ENCODE measurements at regions of chr16 and their contacts with region 1.

Region 1: GRCh38 chr16:10256784-10257641 is 74.8 kb upstream of the GRIN2A start:
- DNase-seq: peak; percentile 27
- H3K4me3 ChIP-seq: no peak overlapping the region
- H3K27ac ChIP-seq: no peak overlapping the region
- H3K4me1 ChIP-seq: peaks cover 6% of the 10 kb centered on the region
- H3K27me3 ChIP-seq: no peaks in the 10 kb centered on the region
- CTCF ChIP-seq: peak; percentile 49 to 83

Region 2: GRCh38 chr16:8878521-8878911 is 1378.5 kb before region 1 on chr16:
- CTCF ChIA-PET with region 1: no interaction called
- dilution Hi-C with region 1: no loop called
- in situ Hi-C with region 1: no loop called
- intact Hi-C with region 1: loop called (anchors 10 kb)
- DNase-seq: peak; percentile 72
- H3K4me3 ChIP-seq: no peak overlapping the region
- H3K27ac ChIP-seq: peak overlapping the region; percentile 34
- H3K4me1 ChIP-seq: peaks cover 15% of the 10 kb centered on the region
- H3K27me3 ChIP-seq: no peaks in the 10 kb centered on the region
- CTCF ChIP-seq: no peak

Region 3: GRCh38 chr16:9258423-9259051 is 998.5 kb before region 1 on chr16:
- CTCF ChIA-PET with region 1: no interaction called
- dilution Hi-C with region 1: no loop called
- in situ Hi-C with region 1: no loop called
- intact Hi-C with region 1: loop called (anchors 2 kb)
- DNase-seq: peak; percentile 12
- H3K4me3 ChIP-seq: no peak overlapping the region
- H3K27ac ChIP-seq: no peak overlapping the region
- H3K4me1 ChIP-seq: no peaks in the 10 kb centered on the region
- H3K27me3 ChIP-seq: no peaks in the 10 kb centered on the region
- CTCF ChIP-seq: peak; percentile 34 to 45

Region 4: DNA sequence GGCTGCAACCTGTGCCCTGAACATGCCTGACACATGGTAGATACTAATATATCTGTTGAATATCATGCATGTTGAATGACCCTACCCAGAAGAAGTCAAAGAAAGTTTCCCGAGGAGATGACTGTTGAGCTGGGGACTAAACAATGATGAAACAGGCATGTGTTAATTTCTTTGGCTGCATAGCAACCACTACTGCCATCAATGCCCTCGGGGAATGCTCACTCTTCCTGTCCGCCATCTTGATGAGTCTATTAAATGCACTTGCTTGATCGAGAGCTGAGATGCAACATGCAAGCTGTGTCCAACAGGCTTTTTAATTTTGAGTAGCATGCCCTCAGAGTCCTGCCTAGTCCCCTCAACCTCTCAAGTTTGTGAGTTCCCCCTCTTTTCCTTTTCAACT is 106.1 kb before region 1 on chr16:
- CTCF ChIA-PET with region 1: no interaction called
- dilution Hi-C with region 1: no loop called
- in situ Hi-C with region 1: no loop called
- intact Hi-C with region 1: no loop called
- DNase-seq: peak; percentile 39
- H3K4me3 ChIP-seq: no peak overlapping the region
- H3K27ac ChIP-seq: no peak overlapping the region
- H3K4me1 ChIP-seq: no peaks in the 10 kb centered on the region
- H3K27me3 ChIP-seq: no peaks in the 10 kb centered on the region
- CTCF ChIP-seq: no peak

Region 5: DNA sequence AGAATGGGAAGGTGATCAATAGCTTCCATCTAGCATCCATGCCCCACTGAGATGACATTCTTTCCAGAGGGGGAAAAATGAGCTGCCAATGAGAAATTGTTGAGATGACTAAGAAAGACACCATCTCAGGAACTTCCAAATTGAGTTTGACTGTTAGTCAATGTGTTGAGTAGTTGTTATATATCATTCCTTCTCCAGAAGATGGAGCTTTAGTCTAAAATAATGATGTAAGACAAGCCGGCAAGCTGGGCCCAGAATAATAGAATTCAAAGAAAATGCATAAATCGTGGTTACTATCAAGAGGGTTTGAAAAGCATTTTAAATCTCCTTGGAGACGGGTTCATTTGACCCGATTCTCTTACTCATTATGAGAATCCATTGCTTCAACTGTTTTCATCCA is 57.8 kb after region 1 on chr16:
- CTCF ChIA-PET with region 1: no interaction called
- dilution Hi-C with region 1: no loop called
- in situ Hi-C with region 1: no loop called
- intact Hi-C with region 1: loop called (anchors 2 kb)
- DNase-seq: peak; percentile 53
- H3K4me3 ChIP-seq: no peak overlapping the region
- H3K27ac ChIP-seq: no peak overlapping the region
- H3K4me1 ChIP-seq: no peaks in the 10 kb centered on the region
- H3K27me3 ChIP-seq: no peaks in the 10 kb centered on the region
- CTCF ChIP-seq: peak; percentile 11 to 52

Region 6: DNA sequence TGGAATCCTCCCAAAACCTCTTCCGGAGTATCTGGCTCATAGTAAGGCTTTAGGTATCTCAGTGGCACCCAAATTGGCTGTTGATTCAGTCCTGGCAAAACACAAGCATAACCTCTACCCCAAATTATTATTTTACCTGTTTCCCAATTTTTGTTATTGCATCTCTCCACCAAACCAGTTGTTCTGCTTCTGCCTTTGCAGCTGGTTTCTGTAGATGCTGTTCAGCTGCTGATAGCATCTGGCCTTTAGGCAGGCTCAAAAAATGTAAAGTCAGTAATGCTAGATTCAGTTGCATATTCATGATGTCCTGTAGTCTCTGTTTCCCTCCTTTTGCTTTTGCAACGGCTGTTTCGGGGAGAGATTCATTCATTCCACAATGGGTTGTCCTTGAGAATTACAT is 162.7 kb after region 1 on chr16:
- CTCF ChIA-PET with region 1: interaction called, 11 read pairs
- dilution Hi-C with region 1: no loop called
- in situ Hi-C with region 1: no loop called
- intact Hi-C with region 1: no loop called
- DNase-seq: no peak
- H3K4me3 ChIP-seq: no peak overlapping the region
- H3K27ac ChIP-seq: no peak overlapping the region
- H3K4me1 ChIP-seq: no peaks in the 10 kb centered on the region
- H3K27me3 ChIP-seq: no peaks in the 10 kb centered on the region
- CTCF ChIP-seq: no peak

Region 7: DNA sequence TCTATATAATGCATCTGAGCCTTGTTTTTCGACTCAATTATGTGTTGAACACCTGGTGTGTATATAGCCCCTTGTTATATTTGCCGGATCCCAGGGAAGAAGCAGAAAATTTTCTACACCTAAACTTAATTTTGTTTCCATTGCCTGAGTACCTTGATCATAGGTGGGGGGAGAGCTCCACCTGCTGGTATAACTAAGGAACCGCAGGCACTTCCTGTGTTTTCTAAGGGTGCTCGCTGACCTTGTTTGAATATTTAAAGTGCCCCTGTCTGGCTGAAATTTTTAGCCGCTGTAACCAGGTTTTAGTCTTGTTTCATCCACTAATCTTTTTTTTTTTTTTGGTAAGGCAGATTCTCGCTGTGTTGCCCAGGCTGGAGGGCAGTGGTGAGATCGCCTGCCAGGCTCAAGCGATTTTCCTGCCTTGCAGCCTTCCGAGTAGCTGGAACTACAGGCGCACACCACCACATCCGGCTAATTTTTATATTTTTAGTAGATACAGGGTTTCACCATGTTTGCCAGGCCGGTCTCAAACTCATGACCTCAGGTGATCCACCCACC is 480.1 kb after region 1 on chr16:
- CTCF ChIA-PET with region 1: no interaction called
- dilution Hi-C with region 1: no loop called
- in situ Hi-C with region 1: no loop called
- intact Hi-C with region 1: loop called (anchors 1 kb)
- DNase-seq: peak; percentile 50
- H3K4me3 ChIP-seq: no peak overlapping the region
- H3K27ac ChIP-seq: no peak overlapping the region
- H3K4me1 ChIP-seq: peaks cover 8% of the 10 kb centered on the region
- H3K27me3 ChIP-seq: no peaks in the 10 kb centered on the region
- CTCF ChIP-seq: peak; percentile 85 to 90